A549 (cell line): ENCODE measurements at regions of chr16 and their contacts with region 1.

Region 1: GRCh38 chr16:81018496-81018895 is 11.5 kb downstream of the CENPN start:
- DNase-seq: no peak
- ATAC-seq: no peak
- H3K4me3 ChIP-seq: no peak overlapping the region
- H3K27ac ChIP-seq: no peak overlapping the region
- H3K4me1 ChIP-seq: no peaks in the 10 kb centered on the region
- CTCF ChIP-seq: no peak
- EP300 ChIP-seq: no peak
- POLR2A ChIP-seq: no peak
- RAD21 ChIP-seq: no peak

Region 2: GRCh38 chr16:81035398-81035974 is 17.0 kb after region 1 on chr16 and contains the start of gene ATMIN:
- CTCF ChIA-PET with region 1: interaction called, 38 read pairs
- POLR2A ChIA-PET with region 1: no interaction called
- DNase-seq: peak; percentile 83 to 85
- ATAC-seq: peak; percentile 96
- H3K4me3 ChIP-seq: peak within 1 kb of the TSS; percentile 94
- H3K27ac ChIP-seq: peak within 1 kb of the TSS; percentile 86 to 96
- H3K4me1 ChIP-seq: peaks cover 9% of the 10 kb centered on the region; the same call in 1 of the 3 replicates
- CTCF ChIP-seq: peak; percentile 100
- EP300 ChIP-seq: no peak
- POLR2A ChIP-seq: peak; percentile 62
- RAD21 ChIP-seq: peak; percentile 52 to 82
- polyA plus RNA-seq, gene ATMIN: 50.4 and 56.4 TPM in 2 replicates